Prostate gland (tissue), 2 donors: ENCODE measurements at regions of chr6 and their contacts with region 1.

Region 1: DNA sequence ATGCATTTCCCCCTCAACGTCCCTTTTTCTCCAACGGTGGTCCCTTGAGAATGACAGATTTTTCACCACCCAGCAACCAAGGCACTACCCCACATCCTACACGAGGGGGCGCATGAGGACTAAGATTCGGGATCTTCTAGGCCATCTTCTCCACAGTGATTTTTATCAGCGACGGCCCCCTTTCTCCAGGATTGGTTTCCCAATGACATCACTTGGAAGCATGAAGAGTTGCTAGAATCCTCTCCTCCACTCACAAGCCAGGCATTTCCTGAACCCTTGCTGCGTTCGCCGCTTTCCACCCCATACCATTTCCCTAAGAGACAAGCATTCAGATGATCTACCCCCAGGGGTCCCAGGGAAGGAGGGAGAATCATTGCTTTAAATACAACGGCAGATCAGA is 252.0 kb downstream of the HIVEP2 start:
- DNase-seq: peak; percentile 52
- H3K4me3 ChIP-seq: no peak overlapping the region
- H3K27ac ChIP-seq: no peak overlapping the region
- H3K4me1 ChIP-seq: no peaks in the 10 kb centered on the region
- H3K27me3 ChIP-seq: no peaks in the 10 kb centered on the region
- CTCF ChIP-seq: peak; percentile 85 to 94 (median 89)
- POLR2A ChIP-seq: no peak

Region 2: GRCh38 chr6:142885182-142885867 is 192.4 kb after region 1 on chr6:
- intact Hi-C with region 1: loop called (anchors 10 kb)
- DNase-seq: peak; percentile 40
- H3K4me3 ChIP-seq: peak overlapping the region in 1 of 2 donors; percentile 11
- H3K27ac ChIP-seq: peak overlapping the region; percentile 13 to 41
- H3K4me1 ChIP-seq: no peaks in the 10 kb centered on the region
- H3K27me3 ChIP-seq: no peaks in the 10 kb centered on the region
- CTCF ChIP-seq: no peak
- POLR2A ChIP-seq: no peak

Region 3: DNA sequence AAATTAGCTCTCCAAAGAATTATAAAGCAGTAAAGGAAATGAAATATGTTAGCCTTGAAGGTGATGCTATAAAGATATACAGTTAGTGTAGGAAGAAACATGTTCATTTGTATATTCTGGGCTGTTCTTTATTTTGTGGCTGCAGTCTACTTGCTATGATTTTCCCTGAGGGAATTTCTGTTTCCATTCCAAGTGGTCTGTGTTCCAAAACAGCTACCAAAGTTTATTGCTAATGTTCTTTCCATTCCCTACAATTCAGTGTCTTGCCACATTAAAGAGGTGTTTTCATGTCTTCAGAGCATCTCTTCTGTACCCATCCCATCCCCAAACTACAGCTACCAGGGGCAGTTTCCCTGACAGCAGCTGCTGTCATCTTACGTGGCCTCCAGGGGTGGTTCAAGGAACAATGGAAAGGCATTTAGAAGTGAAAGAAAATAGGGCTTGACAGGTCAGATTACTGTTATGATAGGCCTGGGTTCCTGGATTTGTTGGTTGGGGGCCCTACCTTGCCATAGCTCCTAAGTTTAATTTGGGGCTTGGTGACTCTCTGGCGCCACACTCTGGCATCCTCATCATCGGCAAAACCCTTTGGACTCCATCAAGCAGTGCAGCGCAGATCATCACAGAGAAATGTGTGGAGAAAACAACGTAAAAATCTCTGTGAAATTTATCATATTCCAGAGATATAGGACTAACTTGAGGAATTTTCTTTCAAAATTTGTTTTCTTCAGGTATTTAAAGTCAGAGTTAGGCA is 333.9 kb after region 1 on chr6:
- intact Hi-C with region 1: loop called (anchors 2 kb)
- DNase-seq: peak; percentile 13
- H3K4me3 ChIP-seq: no peak overlapping the region
- H3K27ac ChIP-seq: no peak overlapping the region
- H3K4me1 ChIP-seq: no peaks in the 10 kb centered on the region
- H3K27me3 ChIP-seq: no peaks in the 10 kb centered on the region
- CTCF ChIP-seq: peak in 3 of 4 experiments; percentile 49 to 64 (median 50)
- POLR2A ChIP-seq: no peak

Region 4: DNA sequence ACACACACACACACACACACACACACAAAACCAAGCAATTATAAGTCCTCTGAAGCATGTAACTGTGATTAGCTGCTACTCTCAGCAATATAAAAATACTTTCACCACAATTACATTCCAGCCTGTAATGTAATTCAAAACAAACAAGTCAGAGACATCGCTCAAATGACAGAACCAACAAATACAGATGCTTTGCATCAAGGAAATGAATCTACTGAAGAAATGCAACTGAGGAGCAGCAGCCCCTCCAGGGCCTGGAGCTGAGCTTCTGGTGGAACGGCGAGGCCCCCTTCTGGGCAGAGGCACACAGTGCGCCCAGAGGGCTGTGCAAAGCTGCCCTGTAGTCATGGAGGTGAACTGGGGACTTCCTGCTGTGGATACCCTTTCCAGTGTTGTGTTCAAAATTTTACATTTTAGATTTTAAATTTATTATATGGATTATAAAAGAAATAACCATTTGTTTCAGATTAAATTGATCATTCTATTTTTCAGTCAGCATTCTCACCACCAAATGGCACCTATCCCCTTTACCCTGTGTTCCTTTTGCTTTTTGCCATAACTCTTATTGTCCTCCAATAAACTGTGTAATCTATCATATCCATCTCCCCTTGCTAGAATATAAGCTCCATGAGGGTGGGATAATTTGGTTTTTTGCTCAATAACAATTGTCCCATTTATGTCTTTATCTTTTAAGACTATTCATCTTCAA is 734.3 kb after region 1 on chr6:
- intact Hi-C with region 1: loop called (anchors 5 kb)
- DNase-seq: peak; percentile 58
- H3K4me3 ChIP-seq: no peak overlapping the region
- H3K27ac ChIP-seq: no peak overlapping the region
- H3K4me1 ChIP-seq: no peaks in the 10 kb centered on the region
- H3K27me3 ChIP-seq: no peaks in the 10 kb centered on the region
- CTCF ChIP-seq: peak; percentile 60 to 87 (median 76)
- POLR2A ChIP-seq: no peak